ENCODE measurements at regions of chr3 and their contacts with region 1.

Region 1: DNA sequence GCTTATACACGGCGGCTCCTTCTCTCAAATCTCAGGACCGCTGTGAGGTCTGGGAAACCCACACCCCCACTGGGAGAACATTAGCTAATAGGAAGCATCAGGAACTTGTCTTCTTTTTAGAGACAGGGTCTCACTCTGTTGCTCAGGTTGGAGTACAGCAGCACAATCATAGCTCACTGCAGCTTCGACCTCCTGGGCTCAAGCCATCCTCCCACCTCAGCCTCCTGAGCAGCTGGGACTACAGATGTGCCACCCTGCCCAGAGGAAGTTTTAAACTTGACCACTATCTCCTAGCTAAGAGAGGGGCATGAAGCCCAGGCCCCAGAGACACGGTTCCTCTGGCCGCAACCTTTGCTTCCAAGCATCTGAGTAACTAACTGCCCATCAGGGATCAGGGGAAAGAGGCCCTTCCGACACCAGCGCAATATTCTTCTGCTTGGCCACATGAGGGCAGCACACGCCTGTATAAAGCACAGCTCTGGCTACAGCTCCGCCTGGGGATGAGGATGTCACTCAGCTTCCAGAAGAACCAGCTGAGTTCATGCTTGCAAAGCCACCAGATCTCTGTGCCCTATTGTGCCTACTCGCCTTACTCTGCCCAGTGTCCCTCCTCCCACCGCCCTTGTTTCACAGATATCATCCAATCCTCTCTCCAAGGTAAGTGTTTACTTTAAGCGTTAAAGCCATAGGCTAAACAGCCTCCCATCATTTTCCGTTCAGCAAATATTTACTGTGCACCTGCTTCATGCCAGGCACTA is 57.5 kb upstream of the SLC6A11 start:
- ATAC-seq: peak; percentile 90 to 99 (median 94)
- H3K4me3 ChIP-seq: no peak overlapping the region
- H3K27ac ChIP-seq: no peak overlapping the region
- H3K4me1 ChIP-seq: no peaks in the 10 kb centered on the region

Region 2: GRCh38 chr3:10945683-10946287 is 187.3 kb after region 1 on chr3:
- in situ Hi-C with region 1: loop called in 1 of 9 experiments (anchors 25 kb)
- ATAC-seq: peak; percentile 72 to 100 (median 85)
- H3K4me3 ChIP-seq: no peak overlapping the region
- H3K27ac ChIP-seq: no peak overlapping the region
- H3K4me1 ChIP-seq: no peaks in the 10 kb centered on the region

Region 3: GRCh38 chr3:11060500-11061251 is 302.2 kb after region 1 on chr3:
- in situ Hi-C with region 1: loop called in 6 of 9 experiments (anchors 10 to 25 kb)
- ATAC-seq: peak; percentile 71 to 89 (median 82)
- H3K4me3 ChIP-seq: peak overlapping the region in 3 of 5 donors; percentile 17 to 32 (median 28)
- H3K27ac ChIP-seq: no peak overlapping the region
- H3K4me1 ChIP-seq: no peaks in the 10 kb centered on the region

Region 4: GRCh38 chr3:11335056-11335608 is 576.6 kb after region 1 on chr3:
- in situ Hi-C with region 1: loop called in 1 of 9 experiments (anchors 25 kb)
- ATAC-seq: peak in 6 of 8 experiments; percentile 37 to 85 (median 74)
- H3K4me3 ChIP-seq: no peak overlapping the region
- H3K27ac ChIP-seq: no peak overlapping the region
- H3K4me1 ChIP-seq: peaks cover 0 to 5% of the 10 kb centered on the region in 2 donors

Region 5: GRCh38 chr3:11680509-11680908 is 922.0 kb after region 1 on chr3:
- in situ Hi-C with region 1: no loop called
- ATAC-seq: no peak
- H3K4me3 ChIP-seq: no peak overlapping the region
- H3K27ac ChIP-seq: no peak overlapping the region
- H3K4me1 ChIP-seq: no peaks in the 10 kb centered on the region

Measured in motor neuron (in vitro differentiated cells).